B cell (primary cell): ENCODE measurements at regions of chr7 and their contacts with region 1.

Region 1: DNA sequence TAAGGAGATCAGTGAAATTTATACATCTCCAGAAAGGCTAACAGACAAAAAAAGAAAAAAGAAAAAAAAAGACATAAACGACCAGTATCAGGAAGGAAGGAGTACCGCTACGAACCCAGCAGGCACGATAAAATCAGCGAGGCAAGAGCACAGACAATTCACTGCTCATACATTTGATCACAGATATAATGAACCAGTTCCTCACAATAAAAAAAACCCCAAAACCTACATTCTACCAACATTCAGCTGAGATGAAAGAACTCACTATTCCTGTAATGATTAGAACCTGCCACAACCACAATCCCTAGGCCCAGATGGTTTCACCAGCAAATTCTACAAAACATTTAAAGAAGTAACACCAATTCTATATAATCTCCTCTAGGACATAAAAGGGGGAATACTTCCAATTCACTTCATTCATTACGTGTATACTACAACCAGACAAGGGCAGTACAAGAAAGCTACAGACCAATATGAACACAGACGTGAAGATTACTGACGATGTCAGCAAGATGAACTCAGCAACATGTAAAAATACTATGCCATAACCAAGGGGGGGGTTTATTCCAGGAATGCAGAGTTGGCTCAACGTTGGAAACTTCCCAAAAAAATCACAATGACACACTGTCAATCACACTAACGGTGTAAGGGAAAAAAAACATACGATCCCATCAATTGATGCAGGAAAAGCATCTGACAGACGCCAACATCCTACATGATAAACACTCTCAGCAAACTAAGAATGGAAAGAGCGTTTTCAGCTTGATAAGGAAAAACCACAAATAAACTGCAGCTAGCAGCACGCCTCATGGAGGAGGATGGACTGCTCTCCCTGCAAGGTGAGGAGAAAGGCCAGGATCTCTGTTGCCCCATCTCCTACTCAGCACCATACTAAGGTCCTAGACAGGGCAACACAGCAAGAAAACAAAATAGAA is 256.2 kb downstream of the ELFN1 start:
- DNase-seq: no peak
- ATAC-seq: no peak
- H3K4me3 ChIP-seq: peak overlapping the region in 1 of 5 experiments; percentile 5
- H3K4me3 Mint-ChIP-seq: peak overlapping the region; percentile 42
- H3K27ac ChIP-seq: peak overlapping the region; percentile 65 to 68
- H3K27ac Mint-ChIP-seq: peak overlapping the region; percentile 82
- H3K4me1 ChIP-seq: peaks cover 45 to 50% of the 10 kb centered on the region in 2 donors
- H3K4me1 Mint-ChIP-seq: peaks cover 56% of the 10 kb centered on the region
- H3K27me3 ChIP-seq: no peaks in the 10 kb centered on the region
- H3K27me3 Mint-ChIP-seq: no peaks in the 10 kb centered on the region
- CTCF ChIP-seq: no peak

Region 2: GRCh38 chr7:2053395-2053794 is 127.2 kb after region 1 on chr7:
- CTCF ChIA-PET with region 1: no interaction called
- POLR2A ChIA-PET with region 1: interaction called, 11 read pairs
- intact Hi-C with region 1: no loop called
- DNase-seq: no peak
- ATAC-seq: no peak
- H3K4me3 ChIP-seq: no peak overlapping the region
- H3K4me3 Mint-ChIP-seq: no peak overlapping the region
- H3K27ac ChIP-seq: no peak overlapping the region
- H3K27ac Mint-ChIP-seq: no peak overlapping the region
- H3K4me1 ChIP-seq: peaks cover 0 to 13% of the 10 kb centered on the region in 2 donors
- H3K4me1 Mint-ChIP-seq: peaks cover 16% of the 10 kb centered on the region
- H3K27me3 ChIP-seq: no peaks in the 10 kb centered on the region
- H3K27me3 Mint-ChIP-seq: no peaks in the 10 kb centered on the region
- CTCF ChIP-seq: no peak